Activated CD4-positive, alpha-beta memory T cell treated with anti-CD3 and anti-CD28 coated beads, Interleukin-2, amount 10 ng/mL, durations not matched to agents 7 days and 5 days (primary cell): ENCODE measurements at regions of chr12 and their contacts with region 1.

Region 1: DNA sequence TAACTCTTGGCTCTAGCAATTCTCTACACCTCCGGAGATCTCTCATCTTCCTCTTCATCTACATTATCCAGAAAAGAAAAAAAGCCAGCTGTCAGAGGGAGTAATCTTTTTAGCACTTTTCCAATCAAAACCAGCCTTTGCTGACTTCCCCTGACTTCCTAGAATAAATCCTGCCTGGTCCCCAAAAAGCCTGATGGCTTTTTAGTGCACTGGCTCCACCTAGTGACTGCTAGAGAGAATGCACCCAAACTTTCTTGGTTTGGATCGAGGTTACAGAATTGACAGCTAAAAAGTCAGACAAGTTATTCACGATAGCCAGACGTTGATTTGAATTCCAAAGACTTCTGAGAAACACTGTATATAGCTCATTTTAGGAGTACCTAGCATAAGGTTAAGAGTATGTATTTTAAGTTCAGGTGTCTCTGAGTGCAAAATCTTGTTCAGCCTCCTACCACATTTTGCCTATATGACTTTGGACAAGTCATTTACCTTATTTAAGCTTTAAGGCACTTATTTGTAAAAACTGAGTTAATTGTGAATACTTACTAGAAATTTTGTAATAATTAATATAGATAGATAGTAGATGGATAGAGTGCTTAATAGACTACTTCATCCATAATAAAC is 185.7 kb upstream of the GRIN2B start:
- DNase-seq: peak; percentile 35
- H3K4me3 Mint-ChIP-seq: no peak overlapping the region
- H3K27ac Mint-ChIP-seq: no peak overlapping the region
- H3K4me1 Mint-ChIP-seq: no peaks in the 10 kb centered on the region
- H3K27me3 Mint-ChIP-seq: no peaks in the 10 kb centered on the region

Region 2: DNA sequence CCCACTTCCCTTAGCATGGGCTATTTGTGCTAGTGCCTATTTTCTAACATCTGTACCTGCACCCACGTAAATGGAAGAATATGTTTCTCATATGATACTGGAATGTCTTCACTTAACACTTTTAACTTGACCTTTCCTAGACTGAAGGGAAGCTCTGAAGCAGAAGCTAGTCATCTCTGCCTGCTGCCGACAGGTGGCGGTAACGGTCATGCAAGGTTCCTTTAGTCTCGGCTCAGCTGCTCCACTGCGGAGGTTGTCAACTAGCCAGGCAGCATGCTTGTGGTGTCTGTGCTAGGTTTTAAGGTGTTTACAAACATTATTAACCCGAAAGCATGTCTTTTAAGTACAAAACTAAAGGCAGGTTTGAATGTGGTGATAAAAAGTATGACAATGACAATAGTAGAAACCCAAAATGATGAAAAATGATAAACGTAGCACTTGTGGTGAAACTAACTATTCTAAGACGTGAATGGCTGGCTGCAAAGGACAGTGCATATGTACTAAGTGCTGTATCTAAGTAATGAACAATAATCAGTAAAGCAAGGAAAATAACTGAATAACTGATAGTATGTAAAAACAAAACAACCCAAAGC is 302.9 kb before region 1 on chr12:
- CTCF ChIA-PET with region 1: interaction called, 25 read pairs
- POLR2A ChIA-PET with region 1: no interaction called
- DNase-seq: peak; percentile 52
- H3K4me3 Mint-ChIP-seq: no peak overlapping the region
- H3K27ac Mint-ChIP-seq: no peak overlapping the region
- H3K4me1 Mint-ChIP-seq: no peaks in the 10 kb centered on the region
- H3K27me3 Mint-ChIP-seq: peaks cover 9% of the 10 kb centered on the region

Region 3: DNA sequence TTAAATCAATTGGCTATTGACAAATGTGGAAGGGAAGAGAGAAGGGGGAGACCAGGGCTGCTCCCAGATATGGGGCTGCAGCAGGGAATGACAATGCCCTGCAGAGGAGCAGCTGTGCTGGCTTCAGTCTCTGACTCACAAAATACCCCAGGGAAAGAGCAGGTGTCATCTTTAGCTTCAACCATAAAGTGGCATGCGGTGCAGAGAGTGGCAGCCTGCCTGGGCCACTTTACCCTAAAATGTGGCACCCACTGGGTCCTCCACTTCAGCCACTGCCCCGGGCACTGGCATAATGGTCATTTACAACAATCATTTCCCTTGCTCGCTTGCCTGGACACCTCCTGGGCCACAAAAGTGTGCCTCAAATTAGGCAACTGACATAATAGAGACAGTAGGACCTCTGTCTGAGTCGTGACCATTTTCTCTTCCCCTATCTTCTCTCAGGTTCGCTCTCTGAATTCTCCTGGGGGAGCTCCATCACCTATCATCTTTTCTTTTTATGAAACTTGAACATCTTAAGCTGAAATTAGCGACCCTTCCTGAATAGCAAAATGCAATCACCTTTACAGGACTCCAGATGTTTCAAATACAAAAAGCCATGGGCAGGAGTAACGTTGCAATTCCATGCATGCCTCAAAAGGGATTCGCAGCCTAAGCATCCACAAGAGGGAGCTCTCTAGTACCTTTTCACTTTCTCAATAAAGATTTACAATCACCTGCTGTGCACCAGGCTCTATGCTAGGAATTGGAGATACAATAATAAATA is 18.5 kb after region 1 on chr12:
- CTCF ChIA-PET with region 1: interaction called, 11 read pairs
- POLR2A ChIA-PET with region 1: no interaction called
- DNase-seq: peak; percentile 18
- H3K4me3 Mint-ChIP-seq: no peak overlapping the region
- H3K27ac Mint-ChIP-seq: no peak overlapping the region
- H3K4me1 Mint-ChIP-seq: no peaks in the 10 kb centered on the region
- H3K27me3 Mint-ChIP-seq: no peaks in the 10 kb centered on the region